Activated T-helper 2 cell treated with anti-CD3 and anti-CD28 coated beads, Interferon-gamma antibody, Interleukin-2, Interleukin-4, amounts not matched to agents 10 μg/mL and 5 μg/mL and 100 μg/mL, durations not matched to agents 14 hours and 24 hours and 36 hours (primary cell): ENCODE measurements at regions of chr1 and their contacts with region 1.

Region 1: GRCh38 chr1:26045722-26046248 is at the start of gene SLC30A2:
- DNase-seq: no peak
- H3K4me3 Mint-ChIP-seq: no peak within 1 kb of the TSS
- H3K27ac Mint-ChIP-seq: no peak within 1 kb of the TSS
- H3K4me1 Mint-ChIP-seq: no peaks in the 10 kb centered on the region
- H3K27me3 Mint-ChIP-seq: peaks cover 70% of the 10 kb centered on the region
- total RNA-seq, gene SLC30A2: not detected in 2 replicates

Region 2: GRCh38 chr1:26097696-26098095 is 51.9 kb after region 1 on chr1:
- intact Hi-C with region 1: no loop called
- DNase-seq: peak; percentile 18
- H3K4me3 Mint-ChIP-seq: no peak overlapping the region
- H3K27ac Mint-ChIP-seq: no peak overlapping the region
- H3K4me1 Mint-ChIP-seq: peaks cover 16% of the 10 kb centered on the region
- H3K27me3 Mint-ChIP-seq: peaks cover 38% of the 10 kb centered on the region

Region 3: DNA sequence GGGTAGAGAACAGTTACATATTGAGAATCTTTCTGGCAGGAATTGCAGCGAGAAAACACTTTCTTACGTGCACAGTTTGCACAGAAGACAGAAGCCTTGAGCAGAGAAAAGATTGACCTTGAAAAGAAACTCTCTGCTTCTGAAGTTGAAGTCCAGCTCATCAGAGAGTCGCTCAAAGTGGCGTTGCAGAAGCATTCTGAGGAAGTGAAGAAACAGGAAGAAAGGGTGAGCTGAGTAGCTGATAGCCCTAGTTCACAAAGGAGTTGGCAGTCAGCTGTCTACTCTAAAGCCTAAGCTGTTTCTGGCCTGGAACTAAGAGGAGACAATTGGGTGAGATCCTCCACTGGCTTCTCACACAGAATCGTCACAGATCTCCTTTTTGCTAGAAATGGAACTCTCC is 213.8 kb after region 1 on chr1:
- intact Hi-C with region 1: no loop called
- DNase-seq: no peak
- H3K4me3 Mint-ChIP-seq: no peak overlapping the region
- H3K27ac Mint-ChIP-seq: peak overlapping the region; percentile 23
- H3K4me1 Mint-ChIP-seq: no peaks in the 10 kb centered on the region
- H3K27me3 Mint-ChIP-seq: no peaks in the 10 kb centered on the region

Region 4: DNA sequence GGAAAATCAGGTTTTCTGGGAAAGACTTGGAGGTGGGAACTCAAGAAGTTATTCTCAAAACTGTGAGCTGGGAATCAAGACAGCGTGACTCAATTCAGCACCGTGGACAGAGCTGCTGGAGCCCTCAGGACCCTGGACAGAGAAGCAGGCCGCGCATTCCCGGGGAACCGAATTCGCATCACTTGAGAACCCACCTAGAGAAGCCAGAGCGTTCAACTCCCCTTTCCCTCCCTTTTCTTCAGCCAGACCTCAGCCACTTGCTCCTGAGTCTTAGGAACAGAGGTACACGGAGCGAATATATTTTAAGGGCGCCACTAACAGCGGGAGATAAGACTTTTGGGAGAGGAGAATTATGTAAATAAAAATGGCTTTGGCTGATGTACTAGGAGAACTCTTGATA is 362.8 kb after region 1 on chr1:
- intact Hi-C with region 1: loop called (anchors 10 kb)
- DNase-seq: peak; percentile 70
- H3K4me3 Mint-ChIP-seq: no peak overlapping the region
- H3K27ac Mint-ChIP-seq: no peak overlapping the region
- H3K4me1 Mint-ChIP-seq: peaks cover 15% of the 10 kb centered on the region
- H3K27me3 Mint-ChIP-seq: peaks cover 55% of the 10 kb centered on the region